Right cardiac atrium (tissue), 5 donors: ENCODE measurements at regions of chr21 and their contacts with region 1.

Region 1: DNA sequence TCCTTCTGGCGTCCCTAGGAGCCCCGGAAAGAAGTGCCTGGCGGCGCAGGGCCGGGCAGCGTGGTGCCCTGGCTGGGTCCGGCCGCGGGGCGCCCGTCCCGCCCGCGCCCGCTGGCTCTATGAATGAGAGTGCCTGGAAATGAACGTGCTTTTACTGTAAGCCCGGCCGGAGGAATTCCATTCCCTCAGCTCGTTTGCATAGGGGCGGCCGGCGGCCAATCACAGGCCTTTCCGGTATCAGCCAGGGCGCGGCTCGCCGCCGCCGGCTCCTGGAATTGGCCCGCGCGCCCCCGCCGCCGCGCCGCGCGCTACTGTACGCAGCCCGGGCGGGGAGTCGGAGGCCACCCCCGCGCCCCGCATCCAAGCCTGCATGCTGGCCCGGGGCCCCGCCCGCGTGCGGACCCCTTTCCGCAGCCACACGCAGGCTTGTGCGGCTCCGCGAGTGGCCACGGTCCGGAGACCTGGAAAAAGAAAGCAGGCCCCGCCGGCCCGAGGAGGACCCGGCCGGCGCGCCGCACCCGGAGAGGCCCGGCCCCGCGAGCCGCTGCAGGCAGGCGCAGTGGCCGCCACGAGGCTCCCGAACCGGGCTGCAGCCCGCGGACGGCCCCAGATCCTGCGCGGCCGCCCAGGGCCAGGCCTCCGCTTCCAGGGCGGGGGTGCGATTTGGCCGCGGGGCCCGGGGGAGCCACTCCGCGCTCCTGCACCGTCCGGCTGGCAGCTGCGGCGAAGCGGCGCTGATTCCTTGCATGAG is 160.4 kb downstream of the RUNX1 start:
- DNase-seq: peak; percentile 95 to 98 (median 96)
- ATAC-seq: peak; percentile 93
- H3K4me3 ChIP-seq: peak overlapping the region; percentile 83
- H3K27ac ChIP-seq: peak overlapping the region; percentile 54
- H3K4me1 ChIP-seq: no peaks in the 10 kb centered on the region
- H3K27me3 ChIP-seq: no peaks in the 10 kb centered on the region

Region 2: GRCh38 chr21:35204850-35205541 is 316.3 kb after region 1 on chr21:
- intact Hi-C with region 1: loop called in 1 of 4 experiments (anchors 10 kb)
- DNase-seq: peak; percentile 88 to 91 (median 91)
- ATAC-seq: peak; percentile 83 to 92
- H3K4me3 ChIP-seq: peak overlapping the region; percentile 27
- H3K27ac ChIP-seq: peak overlapping the region; percentile 32
- H3K4me1 ChIP-seq: peaks cover 5% of the 10 kb centered on the region
- H3K27me3 ChIP-seq: no peaks in the 10 kb centered on the region

Region 3: GRCh38 chr21:35400233-35400957 is 511.7 kb after region 1 on chr21:
- intact Hi-C with region 1: loop called in 2 of 4 experiments (anchors 5 kb)
- DNase-seq: no peak
- ATAC-seq: peak; percentile 59 to 69
- H3K4me3 ChIP-seq: no peak overlapping the region
- H3K27ac ChIP-seq: no peak overlapping the region
- H3K4me1 ChIP-seq: no peaks in the 10 kb centered on the region
- H3K27me3 ChIP-seq: no peaks in the 10 kb centered on the region

Region 4: GRCh38 chr21:35840197-35840799 is 951.6 kb after region 1 on chr21:
- intact Hi-C with region 1: loop called in 1 of 4 experiments (anchors 10 kb)
- DNase-seq: peak in 2 of 3 donors; percentile 53 to 79
- ATAC-seq: peak in 1 of 2 donors; percentile 65
- H3K4me3 ChIP-seq: no peak overlapping the region
- H3K27ac ChIP-seq: no peak overlapping the region
- H3K4me1 ChIP-seq: no peaks in the 10 kb centered on the region
- H3K27me3 ChIP-seq: no peaks in the 10 kb centered on the region